ENCODE measurements at regions of chrX and their contacts with region 1.

Region 1: DNA sequence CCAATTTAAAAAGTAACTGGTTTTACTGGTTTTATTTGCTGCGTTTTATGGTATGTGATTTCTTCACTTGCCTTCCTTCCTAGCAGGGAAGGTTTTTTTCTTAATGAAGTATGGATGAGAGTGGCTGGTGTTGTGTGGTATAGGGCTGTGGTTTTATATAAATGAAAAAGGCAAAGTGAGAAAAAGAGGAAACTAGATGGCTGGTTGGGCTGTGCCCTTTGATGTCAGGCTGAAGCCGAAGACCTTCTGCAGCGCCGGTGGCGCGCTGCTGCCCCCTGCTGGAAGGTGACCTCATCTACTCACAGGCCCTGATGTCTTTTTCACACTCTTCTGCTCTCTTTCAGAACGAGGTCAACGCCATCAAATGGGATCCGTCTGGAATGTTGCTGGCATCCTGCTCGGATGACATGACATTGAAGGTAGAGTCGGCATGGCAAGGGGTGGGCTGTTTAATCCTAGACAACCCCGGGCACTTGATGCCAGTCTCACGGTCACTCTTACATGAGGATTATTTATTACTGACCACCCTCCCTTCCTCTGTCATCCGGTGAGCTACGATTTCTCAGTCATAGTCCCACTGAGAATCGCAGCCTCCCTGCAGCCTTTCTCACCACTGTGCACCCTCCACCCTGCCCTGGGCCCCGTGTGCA is 56.6 kb downstream of the GPR143 start:
- DNase-seq: peak; percentile 92
- H3K4me3 Mint-ChIP-seq: no peak overlapping the region
- H3K27ac Mint-ChIP-seq: no peak overlapping the region
- H3K4me1 Mint-ChIP-seq: peaks cover 8% of the 10 kb centered on the region
- H3K27me3 Mint-ChIP-seq: no peaks in the 10 kb centered on the region

Region 2: GRCh38 chrX:8971116-8971515 is 737.9 kb before region 1 on chrX:
- intact Hi-C with region 1: loop called (anchors 1 kb)
- DNase-seq: peak; percentile 53
- H3K4me3 Mint-ChIP-seq: no peak overlapping the region
- H3K27ac Mint-ChIP-seq: no peak overlapping the region
- H3K4me1 Mint-ChIP-seq: no peaks in the 10 kb centered on the region
- H3K27me3 Mint-ChIP-seq: no peaks in the 10 kb centered on the region

Measured in activated CD4-positive, alpha-beta T cell treated with anti-CD3 and anti-CD28 coated beads, Interleukin-2, amount 10 ng/mL, durations not matched to agents 24 days and 14 days (primary cell).